Activated T-helper 2 cell treated with anti-CD3 and anti-CD28 coated beads, Interferon-gamma antibody, Interleukin-2, Interleukin-4, amounts not matched to agents 10 μg/mL and 5 μg/mL and 100 μg/mL, durations not matched to agents 14 hours and 24 hours and 36 hours (primary cell): ENCODE measurements at regions of chr1 and their contacts with region 1.

Region 1: DNA sequence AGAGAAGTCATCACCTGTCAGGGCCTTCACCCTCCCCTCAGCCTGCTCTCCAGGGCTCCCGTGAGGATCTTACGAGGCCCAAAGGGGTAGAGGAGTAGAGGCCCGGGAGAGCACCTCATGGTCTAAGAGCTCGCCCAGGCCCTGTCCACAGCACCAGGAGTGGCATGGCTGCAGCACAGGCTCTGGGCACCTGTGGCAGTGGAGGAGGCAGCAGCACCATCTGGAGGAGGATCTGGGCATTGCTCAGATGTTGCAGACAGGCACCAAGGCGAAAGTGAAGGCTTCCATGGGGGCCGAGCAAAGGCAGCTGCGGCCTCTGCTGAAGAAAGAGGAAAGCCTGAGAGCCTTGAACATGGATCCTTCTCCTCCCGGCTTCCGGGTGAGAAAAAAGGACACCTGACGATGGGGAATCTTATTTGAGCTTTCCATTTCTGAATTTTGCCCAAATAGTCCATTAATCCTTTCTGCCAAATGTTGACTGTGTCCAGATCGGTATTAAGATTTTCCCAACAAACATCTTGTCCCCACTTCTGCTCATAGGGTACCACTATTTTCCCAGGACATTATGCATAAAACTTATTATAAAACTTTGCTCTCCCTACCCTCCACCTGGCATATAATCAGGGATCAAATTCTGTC is 604.7 kb downstream of the PTPRC start:
- DNase-seq: peak; percentile 67
- H3K4me3 Mint-ChIP-seq: no peak overlapping the region
- H3K27ac Mint-ChIP-seq: no peak overlapping the region
- H3K4me1 Mint-ChIP-seq: peaks cover 9% of the 10 kb centered on the region
- H3K27me3 Mint-ChIP-seq: peaks cover 36% of the 10 kb centered on the region

Region 2: DNA sequence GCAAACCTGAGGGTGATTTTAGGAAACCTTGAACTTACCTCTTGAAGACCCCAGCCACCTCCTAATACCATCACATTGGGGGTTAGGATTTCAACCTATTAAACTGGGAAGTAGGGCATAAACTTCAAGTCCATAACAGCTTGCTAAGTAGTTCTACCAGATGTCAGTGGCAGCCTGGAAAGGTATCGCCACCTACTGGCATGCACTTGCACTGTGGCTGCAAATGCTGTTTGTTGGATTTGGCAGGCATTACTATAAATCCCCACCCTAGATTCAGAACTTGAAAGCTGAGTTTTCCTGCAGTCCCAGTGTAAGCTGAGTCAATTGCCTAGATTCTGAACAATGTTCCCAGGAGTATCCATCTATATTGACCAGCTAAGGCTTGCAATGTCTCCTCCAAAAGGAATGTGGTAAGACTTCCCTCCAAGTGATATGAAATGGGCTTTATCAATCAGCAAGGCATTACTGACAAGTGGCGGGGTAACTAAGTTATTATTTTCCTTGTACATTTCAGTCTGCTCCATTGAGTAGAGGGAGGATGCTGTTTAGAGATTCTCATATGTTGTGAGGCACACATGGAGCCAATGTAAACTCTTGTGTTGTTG is 130.2 kb before region 1 on chr1:
- intact Hi-C with region 1: loop called (anchors 5 kb)
- DNase-seq: peak; percentile 49
- H3K4me3 Mint-ChIP-seq: no peak overlapping the region
- H3K27ac Mint-ChIP-seq: no peak overlapping the region
- H3K4me1 Mint-ChIP-seq: peaks cover 11% of the 10 kb centered on the region
- H3K27me3 Mint-ChIP-seq: no peaks in the 10 kb centered on the region

Region 3: DNA sequence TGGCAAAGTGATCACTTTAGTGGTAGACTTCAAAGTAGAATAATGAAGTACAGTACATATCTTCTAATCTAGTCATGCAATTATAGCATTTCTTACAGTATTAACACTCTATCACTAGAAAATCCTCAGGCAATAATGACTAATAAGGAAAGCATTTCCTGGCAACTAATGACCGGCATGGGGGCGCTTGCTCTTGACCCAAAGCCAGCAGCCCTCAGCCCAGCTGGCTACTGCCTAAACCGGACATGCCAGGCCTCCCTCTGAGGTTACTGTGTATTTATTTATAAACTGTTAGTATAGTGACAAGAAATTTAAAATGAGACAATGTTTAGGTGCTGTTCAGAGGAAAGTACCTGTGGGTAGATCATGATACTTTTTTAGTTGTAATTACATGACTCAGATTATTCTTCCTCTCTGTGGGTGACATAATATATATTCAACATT is 29.1 kb after region 1 on chr1:
- intact Hi-C with region 1: no loop called
- DNase-seq: no peak
- H3K4me3 Mint-ChIP-seq: no peak overlapping the region
- H3K27ac Mint-ChIP-seq: no peak overlapping the region
- H3K4me1 Mint-ChIP-seq: peaks cover 10% of the 10 kb centered on the region
- H3K27me3 Mint-ChIP-seq: peaks cover 17% of the 10 kb centered on the region